ENCODE measurements at regions of chr6 and their contacts with region 1.

Region 1: DNA sequence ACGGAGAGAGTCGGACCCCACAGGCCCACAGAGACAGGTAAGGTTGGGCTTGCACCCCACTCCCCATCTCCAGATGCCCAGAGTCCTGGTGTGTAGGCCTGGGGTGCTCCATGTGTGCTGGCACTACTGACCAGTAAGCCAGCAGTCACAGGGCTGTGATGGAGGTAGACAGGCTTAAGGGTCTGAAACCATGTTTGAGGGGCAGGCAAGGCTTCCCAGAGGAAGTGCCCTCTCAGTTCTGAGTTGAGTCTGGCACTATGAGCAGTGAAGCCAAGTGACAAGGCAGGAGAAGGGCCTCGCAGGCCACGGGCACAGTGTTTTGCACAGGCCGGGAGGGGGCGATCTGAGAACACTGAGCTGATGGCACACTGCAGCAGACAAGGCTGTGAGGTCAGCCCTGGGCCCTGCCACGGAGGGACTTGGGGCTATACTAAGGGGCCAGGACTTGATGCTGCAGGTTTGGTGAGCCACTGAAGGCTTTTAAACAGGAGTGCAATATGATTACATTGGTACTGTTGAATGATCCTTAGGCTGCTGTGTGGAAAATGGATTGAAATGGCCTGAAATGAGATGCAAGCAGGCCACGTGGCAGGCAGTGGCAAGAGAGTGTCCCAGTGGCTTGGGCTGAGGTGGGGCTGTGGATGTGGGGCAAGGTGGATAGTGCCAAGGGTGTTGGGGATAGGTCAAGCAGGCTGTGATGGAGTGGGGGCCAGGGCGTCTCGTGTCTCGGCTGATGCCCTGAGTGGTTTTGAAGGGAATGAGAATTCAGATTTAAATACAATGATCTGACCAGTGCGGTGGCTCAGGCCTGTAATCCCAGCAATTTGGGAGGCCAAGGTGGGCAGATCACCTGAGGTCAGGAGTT is 20.3 kb downstream of the TTBK1 start:
- DNase-seq: peak; percentile 67
- H3K4me3 Mint-ChIP-seq: no peak overlapping the region
- H3K27ac Mint-ChIP-seq: no peak overlapping the region
- H3K4me1 Mint-ChIP-seq: peaks cover 5% of the 10 kb centered on the region
- H3K27me3 Mint-ChIP-seq: peaks cover 23% of the 10 kb centered on the region

Region 2: GRCh38 chr6:43247113-43247999 is 16.2 kb before region 1 on chr6:
- intact Hi-C with region 1: no loop called
- DNase-seq: peak; percentile 77
- H3K4me3 Mint-ChIP-seq: peak overlapping the region; percentile 77
- H3K27ac Mint-ChIP-seq: peak overlapping the region; percentile 85
- H3K4me1 Mint-ChIP-seq: peaks cover 21% of the 10 kb centered on the region
- H3K27me3 Mint-ChIP-seq: peaks cover 17% of the 10 kb centered on the region

Region 3: GRCh38 chr6:43334466-43335095 is 71.0 kb after region 1 on chr6:
- intact Hi-C with region 1: loop called (anchors 1 kb)
- DNase-seq: no peak
- H3K4me3 Mint-ChIP-seq: no peak overlapping the region
- H3K27ac Mint-ChIP-seq: no peak overlapping the region
- H3K4me1 Mint-ChIP-seq: peaks cover 14% of the 10 kb centered on the region
- H3K27me3 Mint-ChIP-seq: no peaks in the 10 kb centered on the region

Region 4: GRCh38 chr6:43402820-43403219 is 139.3 kb after region 1 on chr6:
- intact Hi-C with region 1: loop called (anchors 1 kb)
- DNase-seq: no peak
- H3K4me3 Mint-ChIP-seq: no peak overlapping the region
- H3K27ac Mint-ChIP-seq: no peak overlapping the region
- H3K4me1 Mint-ChIP-seq: no peaks in the 10 kb centered on the region
- H3K27me3 Mint-ChIP-seq: peaks cover 37% of the 10 kb centered on the region

Measured in activated T-helper 1 cell treated with anti-CD3 and anti-CD28 coated beads, Interleukin-12 subunit alpha, Interleukin-12 subunit beta, Interleukin-2, Interleukin-4 antibody, amounts not matched to agents 30 ng/mL and 10 ng/mL and 1 ng/mL, durations not matched to agents 14 hours and 24 hours and 36 hours (primary cell).